H1 (cell line): ENCODE measurements at regions of chr5 and their contacts with region 1.

Region 1: GRCh38 chr5:81851481-81852178 is 100.7 kb upstream of the SSBP2 start:
- DNase-seq: peak; percentile 88 to 97
- H3K4me3 ChIP-seq: peak overlapping the region; percentile 24 to 61 (median 32); a peak in 6 of 8 replicates
- H3K27ac ChIP-seq: peak overlapping the region; percentile 89
- H3K4me1 ChIP-seq: peaks cover 11 to 23% (median 16%) of the 10 kb centered on the region in 4 experiments; a peak in 6 of 7 replicates
- H3K27me3 ChIP-seq: no peaks in the 10 kb centered on the region
- CTCF ChIP-seq: no peak
- EP300 ChIP-seq: peak; percentile 98 to 100
- POLR2A ChIP-seq: peak; percentile 27 to 44; a peak in 2 of 3 replicates
- RAD21 ChIP-seq: peak; percentile 66 to 69

Region 2: DNA sequence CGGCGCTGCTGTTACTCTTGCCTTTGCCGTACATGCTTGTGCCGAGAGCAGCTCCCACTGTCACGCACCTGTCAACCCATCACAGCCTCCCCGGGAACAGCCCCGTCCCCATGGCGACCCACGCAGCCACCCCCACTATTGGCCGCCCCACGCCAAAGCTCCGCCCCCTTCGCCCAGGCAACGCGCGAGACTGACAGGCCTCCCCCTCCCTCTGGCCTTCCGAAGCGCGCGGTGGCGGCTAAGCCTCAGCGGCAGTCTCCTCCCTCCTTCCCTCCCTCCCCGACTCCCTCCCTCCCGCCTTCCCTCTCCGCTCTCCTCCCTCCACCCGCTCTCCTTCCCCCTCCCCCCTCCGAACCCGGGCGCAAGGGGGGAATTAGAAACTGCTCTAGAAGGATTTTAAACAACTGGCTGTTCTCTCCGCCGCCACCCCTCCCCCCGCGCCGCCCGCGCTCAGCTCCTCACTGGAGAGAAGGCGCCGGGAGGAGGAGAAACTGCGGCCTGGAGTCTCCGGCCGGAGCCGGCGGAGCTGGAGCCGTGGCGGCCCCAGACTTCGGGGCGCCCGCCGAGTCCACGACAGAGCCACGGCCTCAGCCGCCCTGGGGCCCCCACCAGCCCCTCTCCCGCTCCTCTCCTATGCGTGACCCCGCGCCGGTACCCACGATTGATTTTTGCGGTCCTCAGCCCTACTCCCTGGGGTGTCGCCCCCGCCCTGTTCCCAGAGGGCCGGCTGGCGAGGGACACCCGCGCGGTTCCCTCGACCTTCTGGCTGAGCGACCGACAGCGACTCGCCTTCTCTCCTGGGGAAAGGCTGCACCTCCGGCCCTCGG is 100.4 kb before region 1 on chr5 and contains the start of gene SSBP2:
- CTCF ChIA-PET with region 1: interaction called, 21 read pairs
- POLR2A ChIA-PET with region 1: interaction called, 157 read pairs
- DNase-seq: peak; percentile 95 to 100
- H3K4me3 ChIP-seq: peak within 1 kb of the TSS; percentile 49 to 84 (median 68)
- H3K27ac ChIP-seq: no peak within 1 kb of the TSS
- H3K4me1 ChIP-seq: peaks cover 4 to 25% (median 13%) of the 10 kb centered on the region in 4 experiments; a peak in 6 of 7 replicates
- H3K27me3 ChIP-seq: no peaks in the 10 kb centered on the region; a peak in 1 of 7 replicates
- CTCF ChIP-seq: peak in 1 of 3 experiments; percentile 9; a peak in 1 of 4 replicates
- EP300 ChIP-seq: peak; percentile 96 to 99
- POLR2A ChIP-seq: peak in 1 of 2 experiments; percentile 30; a peak in 1 of 3 replicates
- RAD21 ChIP-seq: peak; percentile 59 to 67
- total RNA-seq, gene SSBP2: 21.5 and 27.6 TPM in 2 replicates

Region 3: GRCh38 chr5:81787474-81788242 is 64.0 kb before region 1 on chr5:
- CTCF ChIA-PET with region 1: interaction called, 10 read pairs
- POLR2A ChIA-PET with region 1: interaction called, 30 read pairs
- DNase-seq: peak in 1 of 2 experiments; percentile 54
- H3K4me3 ChIP-seq: peak overlapping the region in 1 of 4 experiments; percentile 9; a peak in 1 of 8 replicates
- H3K27ac ChIP-seq: peak overlapping the region; percentile 48; the same call in 1 of the 2 replicates
- H3K4me1 ChIP-seq: peaks cover 0 to 11% (median 8%) of the 10 kb centered on the region in 4 experiments; a peak in 5 of 7 replicates
- H3K27me3 ChIP-seq: no peaks in the 10 kb centered on the region
- CTCF ChIP-seq: no peak
- EP300 ChIP-seq: no peak
- POLR2A ChIP-seq: no peak
- RAD21 ChIP-seq: no peak; a peak in 1 of 4 replicates

Region 4: GRCh38 chr5:81838307-81838906 is 13.2 kb before region 1 on chr5:
- CTCF ChIA-PET with region 1: interaction called, 42 read pairs
- POLR2A ChIA-PET with region 1: interaction called, 25 read pairs
- DNase-seq: no peak
- H3K4me3 ChIP-seq: no peak overlapping the region
- H3K27ac ChIP-seq: no peak overlapping the region
- H3K4me1 ChIP-seq: peaks cover 0 to 9% (median 4%) of the 10 kb centered on the region in 4 experiments; a peak in 3 of 7 replicates
- H3K27me3 ChIP-seq: no peaks in the 10 kb centered on the region
- CTCF ChIP-seq: peak; percentile 36 to 64 (median 43)
- EP300 ChIP-seq: no peak
- POLR2A ChIP-seq: no peak
- RAD21 ChIP-seq: peak; percentile 58 to 73

Region 5: DNA sequence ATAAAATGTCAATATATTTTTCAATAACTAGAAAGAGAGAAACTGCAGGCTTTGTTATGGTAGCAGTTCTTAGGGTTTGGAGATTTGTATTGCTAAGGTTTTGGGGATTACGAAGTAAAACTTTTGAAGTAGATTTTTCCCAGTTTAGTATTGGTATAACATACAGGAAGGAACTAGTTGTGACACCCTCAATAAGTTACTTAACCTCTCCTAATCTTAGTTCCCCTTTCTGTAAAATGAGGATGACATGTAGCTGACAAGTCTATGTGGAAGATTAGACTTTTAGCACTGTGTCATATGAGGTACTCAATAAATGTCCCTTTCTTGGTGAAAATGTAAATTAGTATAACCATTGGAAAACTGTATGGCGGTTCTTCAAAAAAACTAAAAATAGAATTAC is 46.8 kb after region 1 on chr5:
- CTCF ChIA-PET with region 1: no interaction called
- POLR2A ChIA-PET with region 1: no interaction called
- DNase-seq: no peak
- H3K4me3 ChIP-seq: no peak overlapping the region
- H3K27ac ChIP-seq: no peak overlapping the region
- H3K4me1 ChIP-seq: 0 out of 7 replicates have a peak, but pooled peaks cover 0 to 4% (median 0%) of the 10 kb centered on the region in 4 experiments
- H3K27me3 ChIP-seq: no peaks in the 10 kb centered on the region
- CTCF ChIP-seq: no peak
- EP300 ChIP-seq: no peak
- POLR2A ChIP-seq: no peak
- RAD21 ChIP-seq: no peak

Region 6: GRCh38 chr5:82004511-82004910 is 152.9 kb after region 1 on chr5:
- CTCF ChIA-PET with region 1: no interaction called
- POLR2A ChIA-PET with region 1: no interaction called
- DNase-seq: no peak
- H3K4me3 ChIP-seq: no peak overlapping the region
- H3K27ac ChIP-seq: no peak overlapping the region
- H3K4me1 ChIP-seq: no peaks in the 10 kb centered on the region
- H3K27me3 ChIP-seq: no peaks in the 10 kb centered on the region
- CTCF ChIP-seq: no peak
- EP300 ChIP-seq: no peak
- POLR2A ChIP-seq: no peak
- RAD21 ChIP-seq: no peak

Region 7: GRCh38 chr5:82129723-82130285 is 278.2 kb after region 1 on chr5:
- CTCF ChIA-PET with region 1: no interaction called
- POLR2A ChIA-PET with region 1: no interaction called
- DNase-seq: no peak
- H3K4me3 ChIP-seq: no peak overlapping the region
- H3K27ac ChIP-seq: no peak overlapping the region
- H3K4me1 ChIP-seq: peaks cover 0 to 7% (median 3%) of the 10 kb centered on the region in 4 experiments; a peak in 5 of 7 replicates
- H3K27me3 ChIP-seq: no peaks in the 10 kb centered on the region
- CTCF ChIP-seq: no peak
- EP300 ChIP-seq: no peak
- POLR2A ChIP-seq: no peak
- RAD21 ChIP-seq: no peak

Region 8: DNA sequence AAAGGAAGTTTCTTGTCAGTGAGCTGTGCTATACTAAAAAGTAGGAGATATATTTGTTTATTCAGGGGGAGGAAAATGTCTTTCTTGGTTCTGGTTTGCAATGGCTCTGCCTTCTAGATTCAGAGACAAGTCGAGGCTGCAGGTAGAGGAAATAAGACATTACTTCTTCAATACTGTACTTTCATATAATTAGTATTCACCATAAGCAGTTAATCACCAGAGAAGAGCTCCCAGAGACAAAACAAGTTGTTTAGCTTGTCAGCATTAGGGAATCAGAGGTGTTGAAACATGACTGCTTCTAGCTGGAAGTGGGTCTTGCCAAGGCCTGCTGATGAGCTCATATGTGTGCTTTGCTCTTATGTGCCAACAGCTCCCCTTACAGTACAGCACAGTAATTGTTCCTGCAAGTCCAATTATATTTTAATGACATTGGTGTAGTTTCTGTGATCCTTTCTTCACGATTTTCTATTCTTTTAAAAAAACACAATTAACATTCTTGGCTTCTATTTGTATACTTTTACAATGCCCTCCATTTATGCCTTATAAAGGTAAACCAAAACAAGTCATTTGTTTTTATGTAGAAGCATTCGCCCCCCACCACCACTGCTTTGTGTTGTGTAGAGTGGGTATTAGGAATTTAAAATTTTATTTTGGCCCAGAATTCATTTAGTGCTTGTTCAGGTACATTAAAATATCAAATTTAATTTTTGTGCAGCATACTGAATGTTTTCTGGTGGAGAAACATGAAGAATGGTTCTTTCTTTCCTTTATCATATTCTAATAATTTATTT is 314.3 kb after region 1 on chr5:
- CTCF ChIA-PET with region 1: interaction called, 16 read pairs
- POLR2A ChIA-PET with region 1: interaction called, 7 read pairs
- DNase-seq: peak in 1 of 2 experiments; percentile 27
- H3K4me3 ChIP-seq: no peak overlapping the region
- H3K27ac ChIP-seq: no peak overlapping the region
- H3K4me1 ChIP-seq: peaks cover 0 to 6% (median 3%) of the 10 kb centered on the region in 4 experiments; a peak in 5 of 7 replicates
- H3K27me3 ChIP-seq: no peaks in the 10 kb centered on the region
- CTCF ChIP-seq: peak in 2 of 3 experiments; percentile 64 to 79; a peak in 3 of 4 replicates
- EP300 ChIP-seq: no peak
- POLR2A ChIP-seq: no peak
- RAD21 ChIP-seq: peak; percentile 92 to 94